SK-N-SH (cell line): ENCODE measurements at regions of chr2 and their contacts with region 1.

Region 1: GRCh38 chr2:231662028-231662810 is 46.1 kb upstream of the PTMA start:
- DNase-seq: peak; percentile 38
- H3K4me3 ChIP-seq: no peak overlapping the region
- H3K27ac ChIP-seq: no peak overlapping the region
- H3K4me1 ChIP-seq: peaks cover 6 to 9% of the 10 kb centered on the region in 2 experiments; a peak in 2 of 4 replicates
- H3K27me3 ChIP-seq: no peaks in the 10 kb centered on the region
- CTCF ChIP-seq: no peak
- EP300 ChIP-seq: no peak
- RAD21 ChIP-seq: no peak

Region 2: DNA sequence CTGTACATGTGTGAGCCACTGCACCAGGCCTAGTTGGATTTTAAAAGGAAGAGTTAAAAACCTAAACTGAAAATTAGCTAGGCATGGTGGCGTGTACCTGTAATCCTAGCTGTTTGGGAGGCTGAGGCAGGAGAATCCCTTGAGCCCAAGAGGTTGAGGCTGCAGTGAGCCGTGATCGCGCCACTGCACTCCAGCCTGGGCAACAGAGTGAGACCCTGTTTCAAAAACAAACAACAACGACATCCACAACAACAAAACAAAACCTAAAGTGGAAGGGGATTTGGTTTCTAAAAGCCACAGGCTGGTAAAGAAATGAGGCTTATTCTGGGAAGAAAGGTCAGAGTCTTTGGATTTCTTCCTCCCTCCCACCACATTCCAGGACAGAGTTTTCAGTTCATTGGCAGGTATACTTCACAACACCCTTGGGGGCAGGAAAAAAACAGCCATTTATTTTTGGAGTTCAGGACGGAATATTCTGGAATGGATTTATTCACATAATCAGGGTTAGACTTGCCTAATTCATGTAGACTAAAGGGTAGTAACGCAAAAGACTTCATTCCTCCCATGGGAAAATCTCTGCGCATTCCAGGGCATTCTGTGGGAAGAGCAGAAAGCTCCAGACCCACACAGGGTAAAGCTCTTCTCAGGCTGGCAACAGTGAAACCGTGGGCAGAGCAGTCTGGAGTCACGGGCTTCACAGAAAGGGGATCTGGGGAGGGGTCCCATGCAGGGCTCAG is 34.7 kb before region 1 on chr2:
- CTCF ChIA-PET with region 1: no interaction called
- POLR2A ChIA-PET with region 1: no interaction called
- DNase-seq: no peak
- H3K4me3 ChIP-seq: no peak overlapping the region
- H3K27ac ChIP-seq: no peak overlapping the region
- H3K4me1 ChIP-seq: no peaks in the 10 kb centered on the region
- H3K27me3 ChIP-seq: no peaks in the 10 kb centered on the region
- CTCF ChIP-seq: no peak
- EP300 ChIP-seq: no peak
- RAD21 ChIP-seq: no peak

Region 3: DNA sequence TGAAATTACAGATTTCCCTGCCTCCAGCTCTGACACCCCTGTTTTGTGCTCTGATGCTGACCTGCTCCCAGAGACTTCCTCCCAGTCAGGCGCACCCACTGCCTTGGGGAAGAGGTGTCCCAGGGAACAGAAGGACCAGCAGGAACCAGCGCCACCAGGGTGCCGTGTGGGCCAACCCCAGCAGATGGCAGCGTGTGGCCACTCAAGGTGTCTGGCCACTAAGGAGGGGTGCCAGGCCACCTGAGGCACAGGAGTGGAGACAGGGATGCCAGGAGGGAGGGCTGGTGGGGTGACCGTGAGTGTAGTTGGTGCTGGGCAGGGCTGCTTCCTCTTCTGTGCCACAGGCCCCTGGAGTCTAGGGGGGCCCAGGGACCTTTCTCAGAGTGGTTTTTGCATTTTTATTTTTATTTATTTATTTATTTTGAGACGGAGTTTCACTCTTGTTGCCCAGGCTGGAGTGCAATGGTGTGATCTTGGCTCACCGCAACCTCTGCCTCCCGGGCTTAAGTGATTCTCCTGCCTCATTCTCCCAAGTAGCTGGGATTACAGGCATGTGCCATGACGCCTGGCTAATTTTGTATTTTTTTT is 13.5 kb before region 1 on chr2:
- CTCF ChIA-PET with region 1: interaction called, 13 read pairs
- POLR2A ChIA-PET with region 1: no interaction called
- DNase-seq: peak; percentile 85
- H3K4me3 ChIP-seq: no peak overlapping the region
- H3K27ac ChIP-seq: no peak overlapping the region
- H3K4me1 ChIP-seq: peaks cover 0 to 2% of the 10 kb centered on the region in 2 experiments; a peak in 1 of 4 replicates
- H3K27me3 ChIP-seq: no peaks in the 10 kb centered on the region
- CTCF ChIP-seq: peak; percentile 60
- EP300 ChIP-seq: no peak
- RAD21 ChIP-seq: peak; percentile 84